ENCODE measurements at regions of chr12 and their contacts with region 1.

Region 1: GRCh38 chr12:120833849-120834248 is 70.3 kb downstream of the SPPL3 start:
- DNase-seq: no peak
- ATAC-seq: no peak
- H3K4me3 Mint-ChIP-seq: peak overlapping the region; percentile 60
- H3K27ac Mint-ChIP-seq: peak overlapping the region; percentile 82
- H3K4me1 Mint-ChIP-seq: peaks cover 62% of the 10 kb centered on the region
- H3K27me3 Mint-ChIP-seq: no peaks in the 10 kb centered on the region
- CTCF ChIP-seq: no peak

Region 2: DNA sequence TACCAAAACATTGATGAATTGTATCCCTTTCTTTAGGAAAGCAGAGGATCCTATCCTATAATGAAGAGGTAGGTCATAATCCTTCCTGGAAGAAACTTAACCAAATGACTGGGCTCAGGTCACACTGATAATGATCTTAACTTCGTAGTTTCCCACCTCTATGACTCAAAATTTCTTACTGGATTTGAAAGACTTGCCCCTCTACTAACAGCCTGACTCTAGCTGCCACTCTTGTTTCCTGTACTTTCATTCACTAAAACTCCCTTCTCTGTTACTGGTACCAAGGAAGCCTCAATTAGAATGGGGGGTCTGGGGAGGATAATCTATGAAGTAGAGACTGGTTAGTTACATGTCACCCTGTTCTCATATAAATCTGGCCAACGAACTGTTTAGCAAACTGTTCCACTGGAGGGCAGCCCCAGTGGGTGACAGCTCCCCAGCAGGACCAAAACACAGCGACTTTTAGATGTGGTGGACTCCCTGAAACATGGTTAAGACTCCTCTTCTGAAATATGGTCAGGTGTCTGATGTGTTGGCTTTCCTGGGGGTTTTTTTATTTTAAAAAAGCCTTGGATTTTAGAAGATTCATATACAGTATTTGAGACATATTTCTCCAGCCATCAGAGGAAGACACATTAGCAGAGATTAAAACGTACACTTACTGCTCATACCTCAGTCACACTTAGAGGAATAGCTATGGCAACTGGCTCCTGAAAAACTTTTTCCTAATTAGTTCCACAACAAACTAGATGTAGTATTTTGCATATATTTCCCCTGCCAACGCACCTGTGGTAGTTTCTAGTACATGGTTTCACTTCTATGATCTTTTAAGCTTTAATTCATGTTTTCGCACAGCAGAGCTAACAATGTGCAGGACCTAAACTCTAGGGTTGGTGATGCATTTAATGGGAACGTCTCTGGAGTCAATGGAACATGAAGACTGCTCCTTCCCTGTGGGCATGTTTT is 35.9 kb before region 1 on chr12:
- CTCF ChIA-PET with region 1: no interaction called
- POLR2A ChIA-PET with region 1: interaction called, 4 read pairs
- intact Hi-C with region 1: loop called (anchors 5 kb)
- DNase-seq: no peak
- ATAC-seq: peak; percentile 53
- H3K4me3 Mint-ChIP-seq: peak overlapping the region; percentile 36
- H3K27ac Mint-ChIP-seq: peak overlapping the region; percentile 27
- H3K4me1 Mint-ChIP-seq: peaks cover 54% of the 10 kb centered on the region
- H3K27me3 Mint-ChIP-seq: no peaks in the 10 kb centered on the region
- CTCF ChIP-seq: no peak

Region 3: DNA sequence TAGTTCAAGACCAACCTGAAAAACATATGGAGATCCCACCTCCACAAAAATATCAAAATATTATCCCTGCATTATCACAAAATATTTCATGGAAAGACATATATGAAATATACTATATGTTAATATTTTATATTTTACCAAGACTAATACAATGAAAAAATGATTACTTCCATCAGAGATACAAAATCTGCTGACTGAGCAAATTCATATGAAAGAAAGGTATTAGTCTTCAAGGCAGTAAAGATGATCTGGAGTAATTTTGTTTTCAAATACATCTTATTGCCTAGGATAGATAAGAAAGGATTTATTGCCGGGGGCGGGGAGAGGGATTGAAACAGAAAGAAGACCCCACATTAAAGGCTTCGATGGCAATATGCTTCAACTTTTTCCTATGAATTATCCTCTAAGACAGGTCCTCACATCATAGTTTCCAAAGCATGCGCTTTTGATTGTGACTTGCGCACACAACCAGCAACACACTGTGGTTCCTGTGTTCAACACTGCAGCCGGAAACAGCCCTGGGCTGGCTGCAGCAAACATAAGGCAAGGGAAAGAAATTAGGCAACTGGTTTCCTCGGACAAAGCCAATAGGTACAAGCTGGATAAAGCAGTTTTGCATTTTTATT is 12.9 kb before region 1 on chr12:
- CTCF ChIA-PET with region 1: no interaction called
- POLR2A ChIA-PET with region 1: no interaction called
- intact Hi-C with region 1: loop called (anchors 2 kb)
- DNase-seq: no peak
- ATAC-seq: no peak
- H3K4me3 Mint-ChIP-seq: no peak overlapping the region
- H3K27ac Mint-ChIP-seq: no peak overlapping the region
- H3K4me1 Mint-ChIP-seq: peaks cover 23% of the 10 kb centered on the region
- H3K27me3 Mint-ChIP-seq: no peaks in the 10 kb centered on the region
- CTCF ChIP-seq: no peak

Region 4: DNA sequence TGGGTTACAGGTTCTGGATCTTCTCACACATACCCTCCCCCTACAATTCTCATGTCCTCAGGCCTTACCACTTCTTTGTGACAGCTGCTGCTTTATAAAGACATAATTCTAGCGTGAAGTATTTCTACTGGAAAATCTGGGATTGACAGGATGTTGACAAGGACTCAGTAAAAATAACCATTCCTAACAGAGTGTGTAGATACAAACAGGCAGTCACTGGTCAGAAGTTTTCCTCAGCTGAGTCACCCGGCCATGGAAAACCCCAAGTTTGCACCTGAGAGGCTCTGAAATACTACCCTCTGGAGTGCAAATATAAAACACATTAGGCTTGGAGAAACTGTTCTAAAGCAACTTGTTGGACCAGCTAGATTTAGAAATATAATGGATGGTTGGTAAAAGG is 15.9 kb after region 1 on chr12:
- CTCF ChIA-PET with region 1: interaction called, 4 read pairs
- POLR2A ChIA-PET with region 1: interaction called, 18 read pairs
- intact Hi-C with region 1: loop called (anchors 2 kb)
- DNase-seq: no peak
- ATAC-seq: no peak
- H3K4me3 Mint-ChIP-seq: peak overlapping the region; percentile 52
- H3K27ac Mint-ChIP-seq: peak overlapping the region; percentile 77
- H3K4me1 Mint-ChIP-seq: peaks cover 73% of the 10 kb centered on the region
- H3K27me3 Mint-ChIP-seq: no peaks in the 10 kb centered on the region
- CTCF ChIP-seq: no peak

Region 5: DNA sequence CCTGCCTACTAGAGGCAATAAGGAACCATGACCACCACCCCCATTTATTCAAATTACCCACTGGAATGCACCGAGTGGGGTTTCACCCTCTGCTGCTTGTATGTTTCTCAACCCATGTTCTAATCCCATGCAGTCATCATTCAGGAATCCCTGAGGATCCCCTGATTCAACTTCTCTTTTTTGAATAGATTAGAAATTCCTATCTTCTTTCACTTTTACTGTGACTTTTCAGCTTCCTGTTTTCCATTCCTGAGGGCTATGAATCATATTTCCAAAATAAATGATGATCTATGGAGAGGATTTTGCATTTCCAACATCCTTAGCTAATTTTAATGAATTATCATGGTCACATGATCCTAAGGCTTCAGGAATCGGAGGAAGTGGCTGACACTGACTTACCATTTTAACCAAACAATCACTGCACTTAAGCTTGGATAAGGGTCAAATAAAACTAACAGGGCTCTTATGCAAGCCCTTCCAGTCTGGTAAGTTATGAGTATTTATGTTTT is 356.7 kb after region 1 on chr12:
- CTCF ChIA-PET with region 1: no interaction called
- POLR2A ChIA-PET with region 1: interaction called, 10 read pairs
- intact Hi-C with region 1: no loop called
- DNase-seq: no peak
- ATAC-seq: peak; percentile 68
- H3K4me3 Mint-ChIP-seq: no peak overlapping the region
- H3K27ac Mint-ChIP-seq: no peak overlapping the region
- H3K4me1 Mint-ChIP-seq: peaks cover 14% of the 10 kb centered on the region
- H3K27me3 Mint-ChIP-seq: no peaks in the 10 kb centered on the region
- CTCF ChIP-seq: no peak

Measured in activated B cell treated with CpG ODN at 0.5 μM for 24 hours (primary cell).